ENCODE measurements at regions of chr4 and their contacts with region 1.

Region 1: DNA sequence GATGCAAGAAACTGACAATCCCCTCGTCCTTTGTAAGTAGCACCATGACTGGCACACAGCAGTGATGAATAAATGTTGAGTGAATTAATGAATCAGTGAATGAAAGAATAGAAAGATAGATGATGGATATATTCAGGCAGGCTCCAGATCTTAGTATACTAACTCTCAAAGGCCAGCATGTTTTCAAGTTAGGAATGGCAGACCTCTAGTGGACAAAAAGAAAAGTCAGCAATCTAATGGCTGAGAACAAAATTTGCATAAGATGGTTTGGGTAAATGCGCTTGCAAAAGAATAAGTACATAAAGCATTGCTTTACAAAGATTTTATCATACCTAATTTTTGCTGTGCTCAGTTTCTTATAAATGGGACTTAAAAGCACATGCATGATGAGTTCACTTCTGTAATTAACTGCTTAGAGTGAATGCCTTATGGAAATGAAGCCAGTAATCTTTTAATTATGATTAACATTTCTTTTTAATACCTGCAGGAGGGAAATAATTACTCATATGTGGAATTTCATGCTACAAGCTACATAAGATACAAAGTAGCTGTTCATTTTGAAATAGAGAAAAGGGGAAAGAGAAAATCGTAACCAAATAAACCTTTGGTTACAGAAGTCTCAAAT is 126.9 kb upstream of the GPRIN3 start:
- DNase-seq: peak; percentile 46
- H3K4me3 ChIP-seq: no peak overlapping the region
- H3K27ac ChIP-seq: no peak overlapping the region
- H3K4me1 ChIP-seq: no peaks in the 10 kb centered on the region
- H3K27me3 ChIP-seq: peaks cover 0 to 2% of the 10 kb centered on the region in 2 experiments
- CTCF ChIP-seq: peak; percentile 38 to 62
- POLR2A ChIP-seq: no peak

Region 2: DNA sequence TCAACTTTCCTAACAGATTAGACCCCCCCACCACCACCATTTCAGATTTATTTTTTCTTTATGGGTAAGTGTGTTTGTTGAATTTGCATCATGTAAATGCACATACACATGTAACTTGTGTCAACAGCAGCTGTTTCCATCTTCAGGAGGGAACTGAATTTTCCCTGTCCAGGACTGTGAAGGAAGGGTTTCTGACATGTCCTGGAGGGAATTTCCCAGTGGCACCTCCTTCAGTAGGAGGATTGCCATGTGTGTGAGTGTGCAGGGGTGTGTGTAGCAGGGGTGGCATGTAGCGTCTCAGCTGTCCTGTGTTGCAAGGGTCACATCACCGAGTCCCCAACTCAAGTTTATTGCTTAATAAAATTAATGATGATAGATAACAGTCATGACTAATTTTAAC is 1036.1 kb before region 1 on chr4:
- CTCF ChIA-PET with region 1: no interaction called
- POLR2A ChIA-PET with region 1: no interaction called
- dilution Hi-C with region 1: no loop called
- intact Hi-C with region 1: no loop called
- DNase-seq: no peak
- H3K4me3 ChIP-seq: no peak overlapping the region
- H3K27ac ChIP-seq: no peak overlapping the region
- H3K4me1 ChIP-seq: no peaks in the 10 kb centered on the region
- H3K27me3 ChIP-seq: no peaks in the 10 kb centered on the region
- CTCF ChIP-seq: no peak
- POLR2A ChIP-seq: no peak

Region 3: GRCh38 chr4:88919056-88919455 is 515.4 kb before region 1 on chr4:
- CTCF ChIA-PET with region 1: no interaction called
- POLR2A ChIA-PET with region 1: no interaction called
- dilution Hi-C with region 1: no loop called
- intact Hi-C with region 1: no loop called
- DNase-seq: no peak
- H3K4me3 ChIP-seq: no peak overlapping the region
- H3K27ac ChIP-seq: no peak overlapping the region
- H3K4me1 ChIP-seq: no peaks in the 10 kb centered on the region
- H3K27me3 ChIP-seq: no peaks in the 10 kb centered on the region
- CTCF ChIP-seq: no peak
- POLR2A ChIP-seq: no peak

Region 4: GRCh38 chr4:89158884-89159503 is 275.5 kb before region 1 on chr4:
- CTCF ChIA-PET with region 1: interaction called, 5 read pairs
- POLR2A ChIA-PET with region 1: no interaction called
- dilution Hi-C with region 1: no loop called
- intact Hi-C with region 1: loop called (anchors 1 kb)
- DNase-seq: peak; percentile 77
- H3K4me3 ChIP-seq: no peak overlapping the region
- H3K27ac ChIP-seq: no peak overlapping the region
- H3K4me1 ChIP-seq: peaks cover 23% of the 10 kb centered on the region
- H3K27me3 ChIP-seq: no peaks in the 10 kb centered on the region
- CTCF ChIP-seq: peak; percentile 44 to 47
- POLR2A ChIP-seq: no peak

Region 5: GRCh38 chr4:89254847-89255246 is 179.6 kb before region 1 on chr4:
- CTCF ChIA-PET with region 1: interaction called, 18 read pairs
- POLR2A ChIA-PET with region 1: no interaction called
- dilution Hi-C with region 1: no loop called
- intact Hi-C with region 1: loop called (anchors 1 kb)
- DNase-seq: peak; percentile 29
- H3K4me3 ChIP-seq: no peak overlapping the region
- H3K27ac ChIP-seq: no peak overlapping the region
- H3K4me1 ChIP-seq: no peaks in the 10 kb centered on the region
- H3K27me3 ChIP-seq: peaks cover 11% of the 10 kb centered on the region in 2 experiments
- CTCF ChIP-seq: peak; percentile 74 to 79
- POLR2A ChIP-seq: no peak

Region 6: DNA sequence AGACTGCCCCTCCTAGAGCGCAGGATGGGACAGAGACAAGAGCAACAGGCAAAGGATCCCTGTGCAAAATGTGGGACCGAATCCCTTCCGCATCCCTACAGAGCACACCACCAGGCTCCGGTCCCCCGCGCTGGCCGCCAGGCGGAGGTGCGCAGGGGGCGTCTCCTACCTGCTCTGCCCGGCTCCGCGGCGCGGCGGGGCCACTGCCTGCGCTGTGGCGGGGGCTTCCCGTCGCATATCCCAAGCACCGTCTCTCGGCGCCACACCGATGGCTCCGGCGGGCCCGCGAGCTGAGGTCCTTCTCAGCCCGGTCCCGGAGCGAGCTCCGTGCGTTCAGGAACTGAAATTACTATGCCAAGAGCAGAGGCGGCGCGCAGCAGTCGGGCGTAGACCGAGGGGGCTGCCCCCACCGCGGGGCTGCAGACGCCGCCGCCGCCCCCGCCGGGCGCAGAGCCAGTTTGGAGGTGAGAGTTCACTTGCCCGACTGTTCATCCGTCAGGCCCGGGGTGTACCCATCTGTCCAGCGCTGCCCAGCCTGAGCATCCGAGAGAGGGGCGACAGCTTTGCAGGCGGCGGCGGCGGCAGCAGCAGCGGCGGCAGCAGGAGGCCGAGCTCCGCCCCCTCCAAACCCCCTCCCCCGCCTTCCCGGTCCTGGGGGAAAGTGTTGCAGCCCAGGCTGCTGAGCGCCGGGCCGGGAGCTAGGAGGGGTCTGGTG is 126.9 kb before region 1 on chr4 and contains the start of gene GPRIN3:
- CTCF ChIA-PET with region 1: interaction called, 3 read pairs
- POLR2A ChIA-PET with region 1: no interaction called
- dilution Hi-C with region 1: no loop called
- intact Hi-C with region 1: loop called (anchors 1 kb)
- DNase-seq: peak; percentile 62
- H3K4me3 ChIP-seq: peak within 1 kb of the TSS; percentile 48 to 73 (median 50)
- H3K27ac ChIP-seq: no peak within 1 kb of the TSS
- H3K4me1 ChIP-seq: peaks cover 9% of the 10 kb centered on the region
- H3K27me3 ChIP-seq: no peaks in the 10 kb centered on the region
- CTCF ChIP-seq: peak in 1 of 2 donors; percentile 22
- POLR2A ChIP-seq: no peak
- total RNA-seq, gene GPRIN3: 2.2 and 2.4 TPM in 2 replicates

Region 7: GRCh38 chr4:89610236-89610635 is 175.8 kb after region 1 on chr4:
- CTCF ChIA-PET with region 1: no interaction called
- POLR2A ChIA-PET with region 1: no interaction called
- dilution Hi-C with region 1: no loop called
- intact Hi-C with region 1: no loop called
- DNase-seq: no peak
- H3K4me3 ChIP-seq: no peak overlapping the region
- H3K27ac ChIP-seq: no peak overlapping the region
- H3K4me1 ChIP-seq: no peaks in the 10 kb centered on the region
- H3K27me3 ChIP-seq: no peaks in the 10 kb centered on the region
- CTCF ChIP-seq: no peak
- POLR2A ChIP-seq: no peak